Endothelial cell of umbilical vein (primary cell): ENCODE measurements at regions of chr12 and their contacts with region 1.

Region 1: DNA sequence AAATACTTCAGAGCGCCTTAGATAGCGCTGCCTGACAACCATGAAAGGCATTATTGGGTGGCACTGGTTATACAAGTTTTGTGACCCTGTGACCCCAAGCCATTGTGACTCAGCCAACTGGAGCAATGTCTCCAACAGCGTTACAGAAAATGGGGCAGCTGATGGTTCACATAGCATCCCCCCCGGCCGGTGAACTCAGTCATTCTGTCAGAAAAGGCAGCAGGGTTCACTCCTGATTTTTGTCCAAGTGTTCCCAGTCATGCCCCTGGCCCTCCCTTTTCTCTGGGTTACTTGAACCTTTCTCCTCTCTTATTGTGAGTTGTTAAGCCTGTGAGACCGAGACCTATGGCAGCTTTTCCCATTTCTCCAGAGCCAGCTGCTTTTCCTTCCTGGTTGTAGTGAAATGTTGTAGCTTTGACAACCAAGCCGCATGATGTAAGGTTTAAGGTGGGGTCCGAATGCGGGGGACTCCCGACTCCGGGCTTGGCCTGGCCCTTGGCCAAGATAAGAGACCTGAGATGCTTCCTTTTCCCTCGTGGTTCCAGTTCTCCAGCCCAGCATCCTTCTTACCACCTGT is 22.0 kb downstream of the CD9 start:
- DNase-seq: peak; percentile 56
- H3K4me3 ChIP-seq: no peak overlapping the region
- H3K27ac ChIP-seq: peak overlapping the region; percentile 11
- H3K4me1 ChIP-seq: peaks cover 70% of the 10 kb centered on the region
- H3K27me3 ChIP-seq: no peaks in the 10 kb centered on the region
- CTCF ChIP-seq: no peak
- POLR2A ChIP-seq: peak; percentile 42

Region 2: DNA sequence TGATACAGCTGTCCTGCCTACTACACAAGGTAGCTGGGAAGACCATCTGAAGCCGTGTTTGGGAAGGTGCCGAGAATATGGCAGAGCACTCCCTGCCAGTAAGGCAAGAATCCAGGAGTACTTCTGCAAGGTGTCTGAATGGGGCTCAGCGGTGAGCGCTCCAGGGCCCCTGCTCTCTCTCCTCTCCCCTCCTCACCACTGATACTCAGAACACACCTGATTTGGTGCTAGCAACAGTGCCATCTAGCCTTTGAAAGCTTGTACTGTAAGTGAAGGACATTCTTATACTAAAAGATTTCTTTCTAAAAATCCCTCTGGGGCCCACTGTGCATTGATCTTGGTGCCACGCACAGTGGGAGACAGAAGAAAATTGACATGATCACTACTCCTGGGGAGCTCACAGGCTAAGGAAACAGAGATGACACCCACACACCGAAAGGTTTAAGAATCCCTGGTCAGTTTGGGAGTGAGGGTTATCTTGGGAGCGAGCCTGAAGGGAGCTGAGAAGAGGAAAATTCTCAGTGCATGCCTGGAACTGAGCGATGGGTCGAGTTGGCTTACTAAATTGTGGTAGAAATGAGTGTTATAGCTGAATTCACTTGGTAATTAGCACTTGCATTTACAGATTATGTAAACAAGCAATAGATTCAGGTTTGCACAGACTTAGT is 573.3 kb before region 1 on chr12:
- CTCF ChIA-PET with region 1: no interaction called
- POLR2A ChIA-PET with region 1: no interaction called
- dilution Hi-C with region 1: no loop called
- intact Hi-C with region 1: no loop called
- DNase-seq: no peak
- H3K4me3 ChIP-seq: no peak overlapping the region
- H3K27ac ChIP-seq: no peak overlapping the region
- H3K4me1 ChIP-seq: no peaks in the 10 kb centered on the region
- H3K27me3 ChIP-seq: no peaks in the 10 kb centered on the region
- CTCF ChIP-seq: peak; percentile 23 to 30
- POLR2A ChIP-seq: no peak

Region 3: GRCh38 chr12:6205144-6205539 is 17.0 kb before region 1 on chr12:
- CTCF ChIA-PET with region 1: interaction called, 8 read pairs
- POLR2A ChIA-PET with region 1: interaction called, 11 read pairs
- dilution Hi-C with region 1: no loop called
- intact Hi-C with region 1: loop called (anchors 2 kb)
- DNase-seq: peak; percentile 69
- H3K4me3 ChIP-seq: no peak overlapping the region
- H3K27ac ChIP-seq: peak overlapping the region; percentile 85
- H3K4me1 ChIP-seq: peaks cover 48% of the 10 kb centered on the region
- H3K27me3 ChIP-seq: no peaks in the 10 kb centered on the region
- CTCF ChIP-seq: no peak
- POLR2A ChIP-seq: peak; percentile 39